T-cell (primary cell): ENCODE measurements at regions of chr4 and their contacts with region 1.

Region 1: GRCh38 chr4:7171191-7171900 is 21.0 kb upstream of the SORCS2 start:
- DNase-seq: no peak
- ATAC-seq: no peak
- H3K4me3 ChIP-seq: no peak overlapping the region
- H3K4me3 Mint-ChIP-seq: no peak overlapping the region
- H3K27ac ChIP-seq: no peak overlapping the region
- H3K27ac Mint-ChIP-seq: no peak overlapping the region
- H3K4me1 ChIP-seq: peaks cover 0 to 12% of the 10 kb centered on the region in 2 experiments
- H3K4me1 Mint-ChIP-seq: peaks cover 5 to 7% (median 6%) of the 10 kb centered on the region in 3 donors
- H3K27me3 ChIP-seq: peaks cover 2 to 5% of the 10 kb centered on the region in 2 experiments
- H3K27me3 Mint-ChIP-seq: peaks cover 2 to 9% of the 10 kb centered on the region in 2 donors

Region 2: DNA sequence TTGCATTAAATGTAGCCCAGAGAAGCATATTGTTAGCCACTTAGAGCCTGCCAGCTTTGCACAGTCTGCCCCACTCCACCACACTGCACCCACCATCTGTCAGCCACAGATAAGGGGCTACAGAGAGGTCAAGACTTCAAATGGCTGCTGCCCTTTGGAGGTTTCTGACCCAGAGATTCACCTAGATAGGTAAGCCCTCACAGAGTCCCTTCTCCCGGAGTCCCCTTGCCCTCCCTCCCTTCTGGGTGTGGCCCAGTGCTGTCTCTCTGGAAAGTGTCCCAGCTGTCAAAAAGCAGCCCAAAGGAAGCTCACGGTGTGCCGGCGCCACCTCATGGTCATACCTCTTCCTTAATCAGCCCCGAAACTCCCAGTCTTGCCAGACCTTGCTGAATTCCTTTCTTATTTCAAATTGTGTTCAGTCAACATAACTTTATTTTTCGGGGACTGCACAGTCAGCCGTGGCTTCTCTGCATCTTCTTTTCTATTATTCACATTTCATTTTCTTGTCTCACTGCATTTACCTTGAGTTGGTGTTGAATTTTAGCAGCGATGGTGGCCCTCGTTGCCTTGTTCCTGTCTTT is 89.4 kb before region 1 on chr4:
- CTCF ChIA-PET with region 1: no interaction called
- POLR2A ChIA-PET with region 1: no interaction called
- DNase-seq: peak in 3 of 35 experiments; percentile 18 to 47 (median 23)
- ATAC-seq: peak in 1 of 4 experiments; percentile 36
- H3K4me3 ChIP-seq: no peak overlapping the region
- H3K4me3 Mint-ChIP-seq: no peak overlapping the region
- H3K27ac ChIP-seq: no peak overlapping the region
- H3K27ac Mint-ChIP-seq: no peak overlapping the region
- H3K4me1 ChIP-seq: no peaks in the 10 kb centered on the region
- H3K4me1 Mint-ChIP-seq: no peaks in the 10 kb centered on the region
- H3K27me3 ChIP-seq: peaks cover 4 to 32% of the 10 kb centered on the region in 2 experiments
- H3K27me3 Mint-ChIP-seq: peaks cover 25 to 52% of the 10 kb centered on the region in 2 donors

Region 3: GRCh38 chr4:8362483-8362882 is 1191.1 kb after region 1 on chr4:
- CTCF ChIA-PET with region 1: no interaction called
- POLR2A ChIA-PET with region 1: interaction called in 1 of 2 experiments, 11 read pairs
- DNase-seq: no peak
- ATAC-seq: no peak
- H3K4me3 ChIP-seq: no peak overlapping the region
- H3K4me3 Mint-ChIP-seq: no peak overlapping the region
- H3K27ac ChIP-seq: no peak overlapping the region
- H3K27ac Mint-ChIP-seq: no peak overlapping the region
- H3K4me1 ChIP-seq: no peaks in the 10 kb centered on the region
- H3K4me1 Mint-ChIP-seq: no peaks in the 10 kb centered on the region
- H3K27me3 ChIP-seq: peaks cover 0 to 4% of the 10 kb centered on the region in 2 experiments
- H3K27me3 Mint-ChIP-seq: peaks cover 1 to 6% of the 10 kb centered on the region in 2 donors